ENCODE measurements at regions of chr1 and their contacts with region 1.

Region 1: DNA sequence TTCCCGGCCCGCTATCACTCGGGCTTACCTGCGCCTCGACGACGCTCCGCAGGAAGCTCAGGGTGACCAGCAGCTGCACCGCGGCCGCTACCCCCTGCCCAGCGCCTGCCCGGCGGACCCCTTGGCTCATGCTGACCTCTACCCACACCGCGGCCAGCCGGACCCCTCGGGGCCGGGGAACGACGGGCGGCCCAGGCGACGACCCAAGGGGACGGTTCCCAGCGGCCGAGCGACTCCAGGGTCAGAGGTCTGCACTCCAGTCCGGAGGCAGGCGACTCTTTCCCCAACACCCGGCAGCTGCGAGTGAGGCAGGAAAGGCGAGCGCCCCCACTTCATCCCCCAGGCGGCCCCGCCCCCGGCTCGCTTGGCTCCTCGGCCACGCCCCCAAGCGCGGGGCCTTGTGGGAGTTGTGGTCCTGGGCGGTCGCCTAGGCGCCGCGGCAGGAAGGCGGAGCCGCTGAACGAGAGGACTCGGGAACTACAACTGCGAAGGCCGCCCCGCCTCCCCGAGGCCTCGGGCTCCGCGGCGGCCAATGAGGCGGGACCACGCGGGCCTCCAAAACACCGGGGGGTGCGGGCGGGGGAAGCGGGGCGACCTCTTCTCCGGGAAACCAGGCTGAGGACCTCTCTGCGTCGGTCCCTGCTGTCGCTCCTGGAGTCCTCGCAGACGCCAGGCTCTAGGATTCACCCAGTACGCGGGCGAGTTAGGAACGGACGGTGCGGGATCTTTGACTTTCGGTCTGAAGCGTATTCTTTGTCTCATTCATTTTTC is at the start of gene ERO1B:
- DNase-seq: peak; percentile 97 to 99 (median 99)
- ATAC-seq: peak; percentile 100
- H3K4me3 ChIP-seq: peak within 1 kb of the TSS; percentile 95
- H3K27ac ChIP-seq: peak within 1 kb of the TSS; percentile 54
- H3K4me1 ChIP-seq: no peaks in the 10 kb centered on the region
- H3K27me3 ChIP-seq: no peaks in the 10 kb centered on the region
- total RNA-seq, gene ERO1B: 4.4 to 6.3 (median 5.1) TPM

Region 2: GRCh38 chr1:236113324-236114032 is 168.4 kb before region 1 on chr1:
- intact Hi-C with region 1: loop called in 1 of 4 experiments (anchors 10 kb)
- DNase-seq: no peak
- ATAC-seq: peak; percentile 58 to 61
- H3K4me3 ChIP-seq: no peak overlapping the region
- H3K27ac ChIP-seq: peak overlapping the region; percentile 73
- H3K4me1 ChIP-seq: no peaks in the 10 kb centered on the region
- H3K27me3 ChIP-seq: no peaks in the 10 kb centered on the region